ENCODE measurements at regions of chr5 and their contacts with region 1.

Region 1: DNA sequence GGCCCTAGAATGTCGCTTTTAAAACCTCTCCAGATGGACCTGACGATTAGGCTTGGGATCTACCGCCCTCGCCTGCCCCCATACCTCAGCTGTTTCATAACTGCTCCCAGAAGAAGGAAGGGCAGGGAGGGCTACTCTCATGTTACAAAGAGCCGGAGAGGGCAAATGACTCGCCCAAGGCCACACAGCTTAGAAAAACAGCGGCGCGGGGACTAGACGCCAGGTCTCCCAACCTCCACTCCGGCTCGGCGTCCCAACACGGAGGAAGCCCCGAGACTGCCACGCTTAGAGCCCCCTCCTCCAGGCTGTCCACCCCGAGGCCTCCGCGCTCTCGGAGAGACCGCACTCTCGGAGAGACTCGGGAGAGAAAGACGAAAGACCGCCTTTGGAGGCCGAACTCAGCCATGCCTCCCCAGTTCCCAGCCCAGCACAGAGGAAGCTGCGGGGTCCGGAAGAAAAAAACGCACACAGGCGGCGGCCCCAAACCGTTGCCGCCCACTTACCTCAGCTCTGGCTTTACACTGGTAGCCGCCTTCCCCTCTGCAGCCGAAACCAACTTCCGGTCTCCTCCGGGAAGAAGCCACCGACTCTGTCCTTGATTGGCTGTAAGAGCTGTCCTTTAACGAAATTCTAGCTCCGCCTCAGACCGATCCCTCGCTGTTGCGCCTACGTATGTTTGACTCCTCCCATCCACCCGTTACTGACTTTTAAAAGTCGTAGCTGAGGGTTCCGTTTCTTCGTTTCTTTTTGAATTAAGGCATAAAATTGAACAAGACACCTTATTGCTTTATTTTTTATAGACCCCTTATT is at the start of gene MED7:
- DNase-seq: peak; percentile 94
- H3K4me3 ChIP-seq: peak within 1 kb of the TSS; percentile 79 to 100 (median 90)
- H3K27ac ChIP-seq: peak within 1 kb of the TSS; percentile 89 to 99 (median 94)
- H3K4me1 ChIP-seq: peaks cover 7 to 24% (median 12%) of the 10 kb centered on the region in 4 donors
- H3K27me3 ChIP-seq: no peaks in the 10 kb centered on the region
- CTCF ChIP-seq: no peak
- EP300 ChIP-seq: no peak
- POLR2A ChIP-seq: peak; percentile 89
- total RNA-seq, gene MED7: 10.0 to 12.1 (median 11.0) TPM in 3 of 4 donors, not detected in the other

Region 2: GRCh38 chr5:155211764-155212163 is 1930.8 kb before region 1 on chr5:
- in situ Hi-C with region 1: no loop called
- intact Hi-C with region 1: no loop called
- DNase-seq: no peak
- H3K4me3 ChIP-seq: no peak overlapping the region
- H3K27ac ChIP-seq: no peak overlapping the region
- H3K4me1 ChIP-seq: no peaks in the 10 kb centered on the region
- H3K27me3 ChIP-seq: no peaks in the 10 kb centered on the region
- CTCF ChIP-seq: no peak
- EP300 ChIP-seq: no peak
- POLR2A ChIP-seq: no peak

Region 3: GRCh38 chr5:157253547-157253946 is 111.0 kb after region 1 on chr5:
- in situ Hi-C with region 1: loop called in 1 of 4 experiments (anchors 10 kb)
- intact Hi-C with region 1: no loop called
- DNase-seq: peak; percentile 58
- H3K4me3 ChIP-seq: no peak overlapping the region
- H3K27ac ChIP-seq: no peak overlapping the region
- H3K4me1 ChIP-seq: peaks cover 0 to 18% (median 3%) of the 10 kb centered on the region in 4 donors
- H3K27me3 ChIP-seq: no peaks in the 10 kb centered on the region
- CTCF ChIP-seq: peak; percentile 80 to 85 (median 82)
- EP300 ChIP-seq: no peak
- POLR2A ChIP-seq: no peak

Measured in transverse colon (tissue), 4 donors.